Testis (tissue), 5 donors: ENCODE measurements at regions of chr2 and their contacts with region 1.

Region 1: DNA sequence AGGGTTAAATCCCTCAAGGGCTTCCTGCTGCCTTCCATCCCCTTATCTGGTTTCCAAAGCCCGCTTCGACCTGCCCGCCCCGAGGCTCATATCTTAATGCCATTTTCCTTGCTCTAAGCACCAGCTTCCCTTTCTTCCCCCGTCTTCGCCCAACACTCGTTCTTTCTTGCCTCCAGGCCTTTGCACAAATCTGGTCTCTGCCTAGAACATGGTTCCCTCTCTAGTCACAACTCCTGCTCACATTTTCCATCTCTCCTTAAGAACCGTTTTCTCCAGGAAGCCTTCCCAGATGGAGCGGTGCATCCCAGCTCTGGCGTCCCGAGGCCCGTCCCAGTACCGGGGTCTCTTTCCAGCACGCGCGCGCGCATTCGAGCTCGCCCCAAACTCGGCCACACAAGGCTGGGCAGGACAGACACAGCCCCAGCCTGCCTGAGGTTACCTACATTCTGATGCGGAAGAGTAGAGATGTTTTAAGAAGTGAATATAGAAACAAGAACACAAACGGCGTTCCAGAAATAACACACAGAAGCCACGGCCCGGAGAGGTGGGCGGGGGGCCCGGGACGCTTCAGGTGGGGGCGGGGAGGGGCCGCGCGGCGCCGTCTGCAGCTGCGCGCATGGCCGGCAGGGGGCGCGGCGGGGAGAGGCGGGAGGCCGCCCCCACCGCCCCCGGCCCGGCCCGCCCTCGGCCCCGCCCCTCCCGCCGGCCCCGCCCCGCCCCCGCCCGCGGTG is at the start of gene DGKD:
- DNase-seq: peak; percentile 71
- H3K4me3 ChIP-seq: peak within 1 kb of the TSS; percentile 58 to 66
- H3K27ac ChIP-seq: peak within 1 kb of the TSS in 1 of 2 donors; percentile 61
- H3K4me1 ChIP-seq: peaks cover 14% of the 10 kb centered on the region
- H3K27me3 ChIP-seq: no peaks in the 10 kb centered on the region
- CTCF ChIP-seq: peak in 1 of 3 experiments; percentile 56
- POLR2A ChIP-seq: no peak
- total RNA-seq, gene DGKD: 65.1 to 80.1 TPM

Region 2: DNA sequence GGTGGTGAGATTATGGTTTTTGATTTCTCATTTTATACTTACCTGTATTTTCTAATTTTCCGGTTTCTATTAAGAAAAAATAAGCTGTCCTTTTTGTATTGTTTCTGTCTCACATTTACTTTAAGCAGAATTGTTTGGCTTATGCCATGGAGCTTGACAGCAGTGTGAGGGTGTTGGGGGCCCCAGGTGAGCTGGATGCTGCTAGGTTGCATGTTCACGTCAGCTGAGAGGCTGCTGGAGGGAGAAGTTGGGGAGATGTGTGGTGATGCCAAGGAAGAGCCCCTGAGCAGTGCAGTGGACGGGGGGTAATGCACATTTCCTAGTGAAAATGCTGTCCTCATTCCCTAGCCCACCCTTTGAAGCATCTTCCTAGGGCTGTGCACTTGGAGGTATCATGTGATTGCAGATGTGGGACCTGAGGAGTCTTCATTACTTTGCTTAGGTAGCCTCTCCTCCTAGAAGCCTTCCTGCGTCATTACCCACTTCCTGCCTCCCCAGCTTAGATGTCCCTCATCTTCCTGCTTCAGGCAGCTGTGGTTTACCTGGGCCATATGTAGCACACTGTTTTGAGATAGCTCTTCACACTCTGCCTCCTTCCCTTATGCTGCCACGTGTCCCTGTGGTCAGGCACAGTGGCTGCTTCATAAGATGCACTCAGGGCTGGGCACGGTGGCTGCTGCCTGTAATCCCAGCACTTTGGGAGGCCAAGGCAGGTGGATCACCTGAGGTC is 86.3 kb before region 1 on chr2:
- intact Hi-C with region 1: loop called (anchors 10 kb)
- DNase-seq: no peak
- H3K4me3 ChIP-seq: no peak overlapping the region
- H3K27ac ChIP-seq: no peak overlapping the region
- H3K4me1 ChIP-seq: no peaks in the 10 kb centered on the region
- H3K27me3 ChIP-seq: no peaks in the 10 kb centered on the region
- CTCF ChIP-seq: no peak
- POLR2A ChIP-seq: no peak

Region 3: DNA sequence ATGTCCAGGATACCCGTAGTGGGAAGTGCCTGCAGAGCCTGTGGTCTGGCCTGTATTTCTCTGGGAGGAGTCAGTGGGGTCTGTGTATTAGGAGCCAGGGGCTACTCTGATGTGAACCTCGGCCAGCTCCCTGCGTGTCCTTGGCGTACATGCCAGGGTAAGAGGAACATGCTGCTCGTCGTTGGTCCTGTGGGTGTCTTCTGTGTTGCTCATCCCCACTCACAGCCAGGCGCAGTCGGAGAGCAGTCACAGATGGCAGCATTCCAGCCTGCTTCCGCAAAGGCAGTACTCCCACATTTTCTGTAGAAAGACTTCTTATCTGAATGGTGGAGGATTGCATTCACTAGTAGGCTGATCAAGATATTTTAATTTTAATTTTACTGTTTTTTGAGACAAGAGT is 85.3 kb after region 1 on chr2:
- intact Hi-C with region 1: loop called (anchors 10 kb)
- DNase-seq: peak; percentile 89
- H3K4me3 ChIP-seq: no peak overlapping the region
- H3K27ac ChIP-seq: no peak overlapping the region
- H3K4me1 ChIP-seq: peaks cover 6% of the 10 kb centered on the region
- H3K27me3 ChIP-seq: no peaks in the 10 kb centered on the region
- CTCF ChIP-seq: no peak
- POLR2A ChIP-seq: no peak